Activated B cell treated with CpG ODN at 0.5 μM for 24 hours (primary cell): ENCODE measurements at regions of chr17 and their contacts with region 1.

Region 1: GRCh38 chr17:10646392-10646990 is 10.6 kb downstream of the MYH3 start:
- DNase-seq: peak; percentile 56
- ATAC-seq: peak; percentile 65
- H3K4me3 Mint-ChIP-seq: no peak overlapping the region
- H3K27ac Mint-ChIP-seq: no peak overlapping the region
- H3K4me1 Mint-ChIP-seq: peaks cover 2% of the 10 kb centered on the region
- H3K27me3 Mint-ChIP-seq: no peaks in the 10 kb centered on the region
- CTCF ChIP-seq: peak; percentile 26

Region 2: DNA sequence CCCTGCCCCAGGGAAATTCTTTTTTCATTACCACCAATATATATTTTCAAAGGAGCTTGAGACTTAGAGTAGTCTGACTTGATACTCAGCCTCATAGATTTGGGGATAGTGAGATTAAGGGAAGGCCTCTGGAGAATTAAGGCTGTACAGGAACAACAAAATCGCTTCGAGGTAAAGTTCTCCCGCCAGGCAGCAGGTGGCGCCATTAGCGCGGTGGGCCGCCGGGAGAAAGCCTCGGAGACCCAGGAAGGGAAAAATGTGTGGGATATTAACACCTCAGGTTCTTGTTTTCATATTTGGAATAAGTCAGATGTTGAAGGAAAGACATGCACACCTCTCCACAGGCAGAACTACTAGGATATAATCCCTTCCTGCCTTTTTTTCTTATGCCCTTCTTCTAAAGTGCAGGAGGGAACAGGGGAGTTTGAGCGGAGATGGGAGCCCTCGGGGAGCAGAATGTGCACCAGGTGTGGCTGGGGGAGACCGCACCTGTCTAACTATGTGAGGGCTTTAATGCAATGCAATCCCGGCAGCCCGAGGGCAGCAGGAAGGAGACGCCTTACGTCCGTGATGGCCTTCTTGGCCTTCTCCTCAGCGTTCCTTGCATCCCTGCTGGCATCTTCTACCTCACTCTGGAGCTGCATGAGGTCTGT is 15.3 kb before region 1 on chr17:
- CTCF ChIA-PET with region 1: interaction called, 22 read pairs
- POLR2A ChIA-PET with region 1: no interaction called
- intact Hi-C with region 1: no loop called
- DNase-seq: no peak
- ATAC-seq: no peak
- H3K4me3 Mint-ChIP-seq: no peak overlapping the region
- H3K27ac Mint-ChIP-seq: no peak overlapping the region
- H3K4me1 Mint-ChIP-seq: peaks cover 27% of the 10 kb centered on the region
- H3K27me3 Mint-ChIP-seq: no peaks in the 10 kb centered on the region
- CTCF ChIP-seq: peak; percentile 63

Region 3: DNA sequence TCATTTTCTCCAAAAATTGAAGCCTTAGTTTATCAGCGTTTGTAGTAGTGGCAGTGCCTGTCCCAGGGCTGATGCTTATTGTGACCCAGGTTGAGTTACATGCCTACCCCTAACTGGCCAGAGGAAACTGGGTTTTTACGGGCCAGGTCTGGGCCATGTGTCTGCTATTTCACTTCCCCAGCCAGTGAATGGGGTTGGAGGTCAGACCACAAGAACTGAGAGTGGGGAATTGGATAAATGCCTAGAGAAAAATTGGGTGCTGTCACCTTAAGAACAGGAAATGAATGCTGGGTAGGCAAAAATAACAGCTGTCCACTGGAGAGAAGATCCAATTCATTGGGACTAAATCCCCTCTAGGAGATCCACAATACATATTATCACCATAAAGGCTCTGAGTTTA is 56.1 kb after region 1 on chr17:
- CTCF ChIA-PET with region 1: no interaction called
- POLR2A ChIA-PET with region 1: no interaction called
- intact Hi-C with region 1: no loop called
- DNase-seq: no peak
- ATAC-seq: no peak
- H3K4me3 Mint-ChIP-seq: no peak overlapping the region
- H3K27ac Mint-ChIP-seq: peak overlapping the region; percentile 50
- H3K4me1 Mint-ChIP-seq: peaks cover 49% of the 10 kb centered on the region
- H3K27me3 Mint-ChIP-seq: no peaks in the 10 kb centered on the region
- CTCF ChIP-seq: no peak